AG04450 (cell line): ENCODE measurements at regions of chr4 and their contacts with region 1.

Region 1: GRCh38 chr4:142773505-142773904 is 72.6 kb downstream of the INPP4B start:
- DNase-seq: no peak
- H3K4me3 ChIP-seq: no peak overlapping the region
- H3K27ac ChIP-seq: no peak overlapping the region
- H3K27me3 ChIP-seq: no peaks in the 10 kb centered on the region
- CTCF ChIP-seq: no peak

Region 2: GRCh38 chr4:142725886-142726285 is 47.6 kb before region 1 on chr4:
- CTCF ChIA-PET with region 1: no interaction called
- POLR2A ChIA-PET with region 1: no interaction called
- DNase-seq: no peak
- H3K4me3 ChIP-seq: no peak overlapping the region
- H3K27ac ChIP-seq: no peak overlapping the region
- H3K27me3 ChIP-seq: no peaks in the 10 kb centered on the region
- CTCF ChIP-seq: no peak

Region 3: DNA sequence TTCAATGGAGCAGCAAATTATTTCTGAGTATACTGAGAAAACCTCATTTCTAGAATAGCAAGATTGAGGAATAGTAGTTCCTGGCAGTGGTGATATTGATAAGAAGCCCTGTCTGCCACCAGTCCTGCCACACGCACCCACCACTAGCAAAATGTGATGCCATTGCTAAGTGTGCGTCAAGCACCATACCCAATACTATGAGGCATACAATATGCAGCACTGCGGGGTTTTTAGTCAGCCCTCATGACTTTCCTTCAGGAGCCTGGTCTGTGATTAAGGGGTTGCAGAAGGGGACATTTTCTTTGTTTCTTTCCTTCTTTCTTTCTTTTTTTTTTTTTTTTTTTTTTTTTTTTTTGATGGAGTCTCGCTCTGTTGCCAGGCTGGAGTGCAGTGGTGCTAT is 282.5 kb after region 1 on chr4:
- CTCF ChIA-PET with region 1: interaction called, 10 read pairs
- POLR2A ChIA-PET with region 1: no interaction called
- DNase-seq: no peak
- H3K4me3 ChIP-seq: no peak overlapping the region
- H3K27ac ChIP-seq: no peak overlapping the region
- H3K27me3 ChIP-seq: no peaks in the 10 kb centered on the region
- CTCF ChIP-seq: no peak